Ascending aorta (tissue), 2 donors: ENCODE measurements at regions of chr6 and their contacts with region 1.

Region 1: DNA sequence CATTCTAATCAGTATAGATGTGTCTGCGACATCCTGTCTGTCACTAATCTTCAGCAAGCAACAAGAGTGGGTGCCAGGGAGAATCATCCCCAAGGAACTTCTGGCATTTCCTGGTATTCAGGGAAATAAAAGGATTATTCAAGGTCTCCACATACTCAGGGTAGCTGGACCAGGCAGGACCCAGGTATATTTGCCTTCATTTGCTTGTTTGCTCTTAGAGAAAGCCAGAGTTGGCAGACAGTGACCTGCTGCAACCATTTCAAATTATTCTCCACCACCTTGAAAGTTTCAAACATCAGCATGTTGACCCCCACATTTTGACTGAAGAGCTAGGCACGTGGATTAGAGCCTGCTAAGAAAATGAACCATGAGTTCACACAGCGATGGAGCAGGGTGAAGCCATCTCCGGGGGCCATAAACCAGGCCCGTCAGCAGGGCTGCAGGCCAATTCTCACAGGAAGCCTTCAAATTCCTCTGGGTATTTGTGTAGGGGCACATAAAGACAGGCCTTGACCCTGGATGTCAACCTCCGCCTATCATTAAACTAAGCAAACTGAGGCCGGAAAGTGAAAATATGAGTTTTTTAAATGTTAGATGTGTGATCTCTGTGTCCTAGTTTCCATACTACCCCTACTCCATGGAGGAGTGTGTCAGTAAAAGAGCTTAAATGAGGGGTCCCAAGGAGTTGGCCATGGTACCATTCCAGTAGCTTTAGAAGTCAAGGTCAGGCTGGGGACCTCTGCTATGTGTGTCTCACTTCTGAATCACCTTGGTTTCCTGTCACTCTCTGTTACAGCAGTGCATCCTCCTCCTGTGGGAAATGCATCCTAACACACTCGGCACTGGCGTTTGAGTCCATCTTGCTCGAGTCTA is 32.9 kb downstream of the TRAM2 start:
- DNase-seq: peak in 1 of 2 donors; percentile 62
- H3K4me3 ChIP-seq: peak overlapping the region in 1 of 2 donors; percentile 13
- H3K27ac ChIP-seq: peak overlapping the region; percentile 86 to 87
- H3K4me1 ChIP-seq: peaks cover 23 to 86% of the 10 kb centered on the region in 2 donors
- H3K27me3 ChIP-seq: no peaks in the 10 kb centered on the region
- CTCF ChIP-seq: no peak

Region 2: GRCh38 chr6:52522151-52522626 is 21.8 kb before region 1 on chr6:
- intact Hi-C with region 1: loop called (anchors 2 kb)
- DNase-seq: peak in 1 of 2 donors; percentile 87
- H3K4me3 ChIP-seq: peak overlapping the region in 1 of 2 donors; percentile 19
- H3K27ac ChIP-seq: peak overlapping the region; percentile 73 to 74
- H3K4me1 ChIP-seq: peaks cover 22 to 42% of the 10 kb centered on the region in 2 donors
- H3K27me3 ChIP-seq: no peaks in the 10 kb centered on the region
- CTCF ChIP-seq: no peak